CD4-positive, alpha-beta T cell (primary cell): ENCODE measurements at regions of chr17 and their contacts with region 1.

Region 1: DNA sequence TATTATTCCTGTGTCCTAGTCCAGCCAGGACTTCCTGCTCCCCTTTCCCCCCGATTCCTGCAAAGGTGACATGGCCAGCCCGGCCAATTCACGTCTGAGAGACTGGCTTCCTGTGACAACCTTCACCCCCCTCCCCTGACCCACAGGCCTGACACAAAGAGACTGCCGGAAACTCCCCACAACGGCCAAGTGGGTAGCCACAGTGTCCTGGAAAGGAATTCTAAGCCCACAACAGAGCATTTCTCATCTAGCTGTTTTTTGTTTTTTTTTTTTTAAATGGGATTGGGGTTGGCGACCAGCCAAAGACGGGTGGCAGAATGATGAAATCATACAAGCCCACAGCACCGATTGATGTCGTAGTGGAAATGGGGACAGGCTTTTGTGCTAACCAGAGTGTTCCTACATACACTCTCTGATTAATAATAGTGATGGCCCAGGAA is 2.8 kb upstream of the XAF1 start:
- DNase-seq: peak in 10 of 14 experiments; percentile 11 to 85 (median 52)
- ATAC-seq: peak; percentile 49
- H3K4me3 ChIP-seq: no peak overlapping the region
- H3K4me3 Mint-ChIP-seq: peak overlapping the region; percentile 47
- H3K27ac ChIP-seq: peak overlapping the region in 1 of 2 donors; percentile 64
- H3K27ac Mint-ChIP-seq: peak overlapping the region; percentile 80
- H3K4me1 ChIP-seq: peaks cover 52% of the 10 kb centered on the region
- H3K4me1 Mint-ChIP-seq: peaks cover 53% of the 10 kb centered on the region
- H3K27me3 ChIP-seq: no peaks in the 10 kb centered on the region
- H3K27me3 Mint-ChIP-seq: no peaks in the 10 kb centered on the region
- CTCF ChIP-seq: no peak

Region 2: DNA sequence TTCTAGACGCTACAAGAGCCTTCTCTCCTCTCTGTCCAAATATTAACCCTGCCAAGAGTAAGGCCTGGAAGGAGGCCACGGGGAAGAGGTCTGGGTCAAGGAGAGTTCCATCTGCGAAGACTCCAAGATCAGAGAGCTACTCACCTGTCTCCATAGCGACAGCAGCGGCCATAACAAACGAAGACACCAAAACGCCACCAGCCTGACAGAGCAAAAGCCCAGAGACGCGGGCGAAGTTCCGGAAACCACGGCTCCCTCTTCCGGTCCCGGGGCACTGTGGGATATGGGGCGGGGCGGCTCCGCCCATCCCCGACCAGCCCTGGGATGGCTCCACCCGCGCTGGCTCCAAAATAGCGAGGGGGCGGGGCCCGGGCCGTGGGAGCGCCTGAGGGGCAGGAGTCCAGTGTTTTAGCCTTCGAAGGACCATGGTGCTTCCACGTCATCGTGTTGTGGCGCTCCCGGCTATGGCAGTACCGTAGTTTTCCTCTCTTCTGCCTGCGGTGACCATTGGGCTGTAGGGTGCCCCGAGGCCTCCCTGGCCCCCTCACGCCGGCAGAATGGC is 101.6 kb before region 1 on chr17 and contains the starts of genes C17orf100 and MED31:
- CTCF ChIA-PET with region 1: no interaction called
- POLR2A ChIA-PET with region 1: interaction called, 5 read pairs
- intact Hi-C with region 1: loop called (anchors 5 kb)
- DNase-seq: peak; percentile 87 to 98 (median 94)
- ATAC-seq: peak; percentile 81
- H3K4me3 ChIP-seq: peak within 1 kb of the TSS; percentile 64
- H3K4me3 Mint-ChIP-seq: peak within 1 kb of the TSS; percentile 99
- H3K27ac ChIP-seq: peak within 1 kb of the TSS; percentile 98
- H3K27ac Mint-ChIP-seq: peak within 1 kb of the TSS; percentile 99
- H3K4me1 ChIP-seq: peaks cover 35% of the 10 kb centered on the region
- H3K4me1 Mint-ChIP-seq: peaks cover 73% of the 10 kb centered on the region
- H3K27me3 ChIP-seq: peaks cover 0 to 4% of the 10 kb centered on the region in 2 experiments
- H3K27me3 Mint-ChIP-seq: no peaks in the 10 kb centered on the region
- CTCF ChIP-seq: no peak
- total RNA-seq, gene C17orf100: 0.69 to 0.70 TPM
- total RNA-seq, gene MED31: 31.4 to 32.0 TPM